ENCODE measurements at regions of chr14 and their contacts with region 1.

Region 1: GRCh38 chr14:77028384-77029231 is at the start of gene IRF2BPL:
- DNase-seq: peak; percentile 95
- ATAC-seq: peak; percentile 73
- H3K4me3 Mint-ChIP-seq: peak within 1 kb of the TSS; percentile 96
- H3K27ac Mint-ChIP-seq: peak within 1 kb of the TSS; percentile 97
- H3K4me1 Mint-ChIP-seq: peaks cover 42% of the 10 kb centered on the region
- H3K27me3 Mint-ChIP-seq: no peaks in the 10 kb centered on the region
- total RNA-seq, gene IRF2BPL: 38.5 to 41.0 TPM

Region 2: DNA sequence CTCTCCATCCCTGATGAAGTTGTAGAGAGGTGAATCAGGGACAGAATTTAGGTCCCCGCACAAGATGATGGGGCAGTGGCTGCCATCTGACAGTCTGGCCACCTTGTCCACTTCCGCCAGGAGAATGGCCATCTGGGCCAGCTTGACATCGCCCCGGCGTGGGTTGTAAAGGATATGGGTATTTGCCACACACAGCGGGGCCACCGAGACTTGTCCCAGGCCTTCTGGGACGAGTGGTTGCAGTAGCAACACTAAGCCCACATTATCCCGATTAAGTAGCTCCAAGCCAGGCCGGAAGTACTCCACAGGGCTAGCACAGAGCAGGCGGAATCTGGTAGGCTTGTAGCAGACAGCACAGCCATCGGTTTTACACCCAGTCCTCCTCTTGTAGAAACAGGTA is 222.2 kb before region 1 on chr14:
- POLR2A ChIA-PET with region 1: no interaction called
- DNase-seq: no peak
- ATAC-seq: no peak
- H3K4me3 Mint-ChIP-seq: no peak overlapping the region
- H3K27ac Mint-ChIP-seq: no peak overlapping the region
- H3K4me1 Mint-ChIP-seq: peaks cover 14% of the 10 kb centered on the region
- H3K27me3 Mint-ChIP-seq: no peaks in the 10 kb centered on the region

Region 3: GRCh38 chr14:76918751-76919543 is 109.7 kb before region 1 on chr14:
- POLR2A ChIA-PET with region 1: interaction called, 23 read pairs
- DNase-seq: no peak
- ATAC-seq: no peak
- H3K4me3 Mint-ChIP-seq: peak overlapping the region; percentile 47
- H3K27ac Mint-ChIP-seq: peak overlapping the region; percentile 58
- H3K4me1 Mint-ChIP-seq: peaks cover 49% of the 10 kb centered on the region
- H3K27me3 Mint-ChIP-seq: peaks cover 3% of the 10 kb centered on the region

Region 4: DNA sequence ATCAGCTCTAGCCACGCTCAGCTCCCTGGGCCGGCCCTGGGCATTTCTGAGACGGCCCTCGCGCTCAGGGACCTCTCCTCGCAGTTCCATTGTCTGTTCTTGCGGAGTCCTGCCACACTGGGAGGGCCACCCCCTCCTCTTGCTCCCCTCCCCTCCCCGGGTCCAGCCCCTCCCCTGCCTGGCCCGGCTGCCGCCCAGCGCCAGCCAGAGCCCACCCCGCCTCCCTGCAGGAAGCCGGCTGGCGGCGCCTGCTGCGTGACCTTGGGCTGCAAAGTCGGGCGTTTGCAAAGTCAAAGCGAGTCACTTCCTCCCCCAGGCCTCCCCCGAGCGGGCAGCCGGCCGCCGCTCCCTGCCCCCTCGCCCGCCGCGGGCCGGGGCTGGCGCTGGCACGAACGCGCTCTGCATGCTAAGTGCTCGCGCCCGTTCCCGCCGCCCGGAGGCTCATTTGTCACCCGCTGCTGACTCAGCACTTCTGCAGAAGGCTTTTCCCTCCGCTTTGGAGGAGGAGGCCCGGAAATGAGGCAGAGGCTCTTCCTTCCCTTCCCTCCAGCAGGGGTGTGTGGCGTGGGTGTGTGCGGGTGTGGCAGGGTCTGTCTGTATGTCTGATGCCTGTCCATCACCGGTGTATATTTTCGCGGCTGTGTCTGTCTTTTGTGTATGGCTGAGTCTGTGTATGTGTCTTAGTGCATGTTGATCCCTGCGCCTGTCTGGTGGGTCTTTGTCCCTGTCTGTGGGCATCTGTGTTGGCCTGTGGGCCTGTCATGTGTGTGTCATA is 72.1 kb before region 1 on chr14:
- POLR2A ChIA-PET with region 1: interaction called, 238 read pairs
- DNase-seq: peak; percentile 90
- ATAC-seq: peak; percentile 62
- H3K4me3 Mint-ChIP-seq: peak overlapping the region; percentile 86
- H3K27ac Mint-ChIP-seq: peak overlapping the region; percentile 96
- H3K4me1 Mint-ChIP-seq: peaks cover 65% of the 10 kb centered on the region
- H3K27me3 Mint-ChIP-seq: no peaks in the 10 kb centered on the region

Region 5: GRCh38 chr14:77040059-77040740 is 11.6 kb after region 1 on chr14:
- POLR2A ChIA-PET with region 1: interaction called, 140 read pairs
- DNase-seq: peak; percentile 93
- ATAC-seq: peak; percentile 70
- H3K4me3 Mint-ChIP-seq: peak overlapping the region; percentile 87
- H3K27ac Mint-ChIP-seq: peak overlapping the region; percentile 99
- H3K4me1 Mint-ChIP-seq: peaks cover 72% of the 10 kb centered on the region
- H3K27me3 Mint-ChIP-seq: no peaks in the 10 kb centered on the region

Measured in activated naive CD8-positive, alpha-beta T cell treated with anti-CD3 and anti-CD28 coated beads, Interleukin-2, amount 10 ng/mL, durations not matched to agents 7 days and 5 days (primary cell).